Breast epithelium (tissue), 4 donors: ENCODE measurements at regions of chr4 and their contacts with region 1.

Region 1: DNA sequence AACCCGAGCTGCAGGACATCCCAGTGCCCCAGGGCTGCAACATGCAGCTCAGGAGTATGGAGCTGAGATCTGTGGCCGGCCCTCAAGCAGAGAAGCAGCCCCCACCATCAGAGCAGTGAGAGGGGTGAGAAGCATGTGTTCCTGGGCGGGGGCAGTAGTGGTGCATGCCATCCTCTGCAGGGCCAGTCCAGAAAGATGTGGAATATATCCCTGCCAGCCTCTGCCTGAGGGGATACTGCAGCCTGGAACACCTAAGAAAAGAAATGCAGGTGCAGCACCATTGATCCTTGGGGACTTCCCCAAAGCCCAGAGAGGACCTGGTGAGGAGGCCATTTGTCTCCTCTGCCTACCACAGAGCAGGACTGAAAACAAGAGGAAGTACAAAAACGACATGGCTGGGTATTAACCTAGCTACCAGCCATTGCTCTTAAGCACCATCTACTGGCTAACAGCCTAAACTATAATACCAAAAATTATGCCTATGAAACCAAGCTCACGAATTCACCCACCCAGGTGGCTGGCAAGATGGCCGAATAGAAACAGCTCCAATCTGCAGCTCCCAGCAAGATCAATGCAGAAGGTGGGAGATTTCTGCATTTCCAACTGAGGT is 158.8 kb downstream of the ADGRA3 start:
- DNase-seq: no peak
- H3K4me3 ChIP-seq: no peak overlapping the region
- H3K27ac ChIP-seq: no peak overlapping the region
- H3K4me1 ChIP-seq: no peaks in the 10 kb centered on the region
- H3K27me3 ChIP-seq: no peaks in the 10 kb centered on the region
- CTCF ChIP-seq: no peak
- POLR2A ChIP-seq: no peak

Region 2: GRCh38 chr4:20816287-20816686 is 1540.8 kb before region 1 on chr4:
- intact Hi-C with region 1: loop called (anchors 5 kb)
- DNase-seq: no peak
- H3K4me3 ChIP-seq: no peak overlapping the region
- H3K27ac ChIP-seq: no peak overlapping the region
- H3K4me1 ChIP-seq: no peaks in the 10 kb centered on the region
- H3K27me3 ChIP-seq: no peaks in the 10 kb centered on the region
- CTCF ChIP-seq: no peak
- POLR2A ChIP-seq: no peak